ENCODE measurements at regions of chr18 and their contacts with region 1.

Region 1: DNA sequence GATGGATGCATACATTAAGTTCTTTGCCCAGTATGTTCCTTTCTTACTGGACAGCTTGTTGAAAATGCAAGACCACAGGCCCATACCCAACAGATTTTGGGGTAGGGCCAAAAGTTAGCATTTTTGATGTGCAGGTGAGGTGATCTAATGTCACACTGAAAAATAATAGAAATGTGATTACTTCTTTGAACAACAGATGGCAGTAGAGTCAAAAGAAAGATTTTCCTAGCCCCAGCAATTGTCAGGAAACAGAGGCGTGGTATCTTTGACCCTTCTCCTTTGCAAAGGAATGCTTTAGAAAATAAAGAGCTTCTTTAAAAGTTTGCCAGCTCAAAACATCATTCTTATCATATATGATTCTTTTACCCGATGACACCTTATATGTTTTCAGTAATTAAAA is 343.6 kb upstream of the SYT4 start:
- DNase-seq: no peak
- ATAC-seq: peak in 2 of 4 donors; percentile 46 to 57
- H3K4me3 ChIP-seq: no peak overlapping the region
- H3K27ac ChIP-seq: no peak overlapping the region
- H3K4me1 ChIP-seq: no peaks in the 10 kb centered on the region
- H3K27me3 ChIP-seq: no peaks in the 10 kb centered on the region
- CTCF ChIP-seq: peak; percentile 41 to 71 (median 54)
- POLR2A ChIP-seq: no peak

Region 2: GRCh38 chr18:43661570-43661969 is 40.6 kb after region 1 on chr18:
- intact Hi-C with region 1: no loop called
- DNase-seq: no peak
- ATAC-seq: peak in 2 of 4 donors; percentile 46 to 57
- H3K4me3 ChIP-seq: no peak overlapping the region
- H3K27ac ChIP-seq: no peak overlapping the region
- H3K4me1 ChIP-seq: peaks cover 0 to 6% (median 0%) of the 10 kb centered on the region in 12 donors
- H3K27me3 ChIP-seq: no peaks in the 10 kb centered on the region
- CTCF ChIP-seq: peak in 10 of 12 donors; percentile 14 to 38 (median 22)
- POLR2A ChIP-seq: no peak

Region 3: DNA sequence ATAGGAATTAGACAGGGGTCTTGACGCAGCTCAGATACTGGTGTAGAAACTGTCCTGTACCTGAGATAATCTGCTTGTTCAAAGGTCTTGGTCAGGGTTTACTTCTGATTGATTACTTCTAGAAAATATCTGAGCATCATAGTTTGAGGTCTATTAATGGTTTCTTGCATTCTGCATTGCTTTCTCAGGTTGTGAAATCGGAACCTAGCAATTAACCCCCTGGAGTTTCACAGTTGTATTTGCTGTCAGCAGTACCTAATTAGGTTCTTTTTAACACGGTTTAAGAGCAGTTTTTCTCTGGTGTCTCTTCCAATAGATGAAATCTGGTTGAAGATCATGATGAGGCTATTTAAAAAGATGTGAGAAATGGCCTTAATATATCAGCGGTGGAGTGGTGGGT is 84.9 kb after region 1 on chr18:
- intact Hi-C with region 1: no loop called
- DNase-seq: no peak
- ATAC-seq: no peak
- H3K4me3 ChIP-seq: no peak overlapping the region
- H3K27ac ChIP-seq: no peak overlapping the region
- H3K4me1 ChIP-seq: no peaks in the 10 kb centered on the region
- H3K27me3 ChIP-seq: no peaks in the 10 kb centered on the region
- CTCF ChIP-seq: no peak
- POLR2A ChIP-seq: no peak

Region 4: GRCh38 chr18:43789234-43790000 is 168.5 kb after region 1 on chr18:
- intact Hi-C with region 1: loop called in 1 of 10 experiments (anchors 5 kb)
- DNase-seq: no peak
- ATAC-seq: peak in 2 of 4 donors; percentile 44 to 64
- H3K4me3 ChIP-seq: no peak overlapping the region
- H3K27ac ChIP-seq: no peak overlapping the region
- H3K4me1 ChIP-seq: peaks cover 0 to 3% (median 0%) of the 10 kb centered on the region in 12 donors
- H3K27me3 ChIP-seq: no peaks in the 10 kb centered on the region
- CTCF ChIP-seq: peak in 9 of 12 donors; percentile 10 to 64 (median 44)
- POLR2A ChIP-seq: no peak

Region 5: GRCh38 chr18:44039826-44040225 is 418.9 kb after region 1 on chr18:
- intact Hi-C with region 1: no loop called
- DNase-seq: no peak
- ATAC-seq: no peak
- H3K4me3 ChIP-seq: no peak overlapping the region
- H3K27ac ChIP-seq: no peak overlapping the region
- H3K4me1 ChIP-seq: no peaks in the 10 kb centered on the region
- H3K27me3 ChIP-seq: no peaks in the 10 kb centered on the region
- CTCF ChIP-seq: no peak
- POLR2A ChIP-seq: no peak

Region 6: DNA sequence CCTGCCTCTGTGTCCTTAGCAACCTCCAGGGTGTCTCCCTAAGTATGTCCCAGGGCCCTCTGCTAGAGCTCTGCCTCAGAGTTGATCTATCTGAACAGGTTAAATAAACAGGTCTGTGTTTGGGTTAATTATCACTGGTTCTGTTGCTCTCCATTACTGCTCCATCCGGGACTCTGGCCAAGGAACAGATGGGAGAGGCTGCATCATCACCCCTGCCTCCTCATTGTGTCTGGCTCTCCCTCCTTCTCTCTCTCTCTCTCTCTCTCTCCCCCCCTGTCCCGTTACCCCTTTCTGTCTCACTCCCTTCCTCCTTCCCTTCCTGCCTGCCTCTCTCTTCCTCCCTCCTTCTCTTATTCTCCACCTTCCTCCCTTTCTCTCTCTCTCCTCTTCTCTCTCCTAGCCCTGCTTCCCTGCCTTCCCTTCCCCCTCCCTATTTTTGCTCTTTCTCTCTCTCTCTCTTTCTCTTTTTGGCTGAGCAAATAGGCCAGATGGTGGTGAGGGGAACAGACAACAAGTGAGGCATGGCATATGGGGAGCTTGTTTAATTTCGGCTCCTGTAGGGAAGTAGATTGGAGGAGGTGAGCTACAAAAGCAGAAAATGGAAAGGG is 1121.9 kb after region 1 on chr18:
- intact Hi-C with region 1: loop called in 1 of 10 experiments (anchors 5 kb)
- DNase-seq: peak in 4 of 5 donors; percentile 59 to 76 (median 72)
- ATAC-seq: peak; percentile 38 to 85 (median 70)
- H3K4me3 ChIP-seq: no peak overlapping the region
- H3K27ac ChIP-seq: peak overlapping the region in 10 of 12 donors; percentile 14 to 66 (median 52)
- H3K4me1 ChIP-seq: peaks cover 0 to 50% (median 27%) of the 10 kb centered on the region in 12 donors
- H3K27me3 ChIP-seq: peaks cover 0 to 56% (median 0%) of the 10 kb centered on the region in 9 donors
- CTCF ChIP-seq: no peak
- POLR2A ChIP-seq: no peak

Measured in heart left ventricle (tissue), 16 donors.